Caki2 (cell line): ENCODE measurements at regions of chr17 and their contacts with region 1.

Region 1: DNA sequence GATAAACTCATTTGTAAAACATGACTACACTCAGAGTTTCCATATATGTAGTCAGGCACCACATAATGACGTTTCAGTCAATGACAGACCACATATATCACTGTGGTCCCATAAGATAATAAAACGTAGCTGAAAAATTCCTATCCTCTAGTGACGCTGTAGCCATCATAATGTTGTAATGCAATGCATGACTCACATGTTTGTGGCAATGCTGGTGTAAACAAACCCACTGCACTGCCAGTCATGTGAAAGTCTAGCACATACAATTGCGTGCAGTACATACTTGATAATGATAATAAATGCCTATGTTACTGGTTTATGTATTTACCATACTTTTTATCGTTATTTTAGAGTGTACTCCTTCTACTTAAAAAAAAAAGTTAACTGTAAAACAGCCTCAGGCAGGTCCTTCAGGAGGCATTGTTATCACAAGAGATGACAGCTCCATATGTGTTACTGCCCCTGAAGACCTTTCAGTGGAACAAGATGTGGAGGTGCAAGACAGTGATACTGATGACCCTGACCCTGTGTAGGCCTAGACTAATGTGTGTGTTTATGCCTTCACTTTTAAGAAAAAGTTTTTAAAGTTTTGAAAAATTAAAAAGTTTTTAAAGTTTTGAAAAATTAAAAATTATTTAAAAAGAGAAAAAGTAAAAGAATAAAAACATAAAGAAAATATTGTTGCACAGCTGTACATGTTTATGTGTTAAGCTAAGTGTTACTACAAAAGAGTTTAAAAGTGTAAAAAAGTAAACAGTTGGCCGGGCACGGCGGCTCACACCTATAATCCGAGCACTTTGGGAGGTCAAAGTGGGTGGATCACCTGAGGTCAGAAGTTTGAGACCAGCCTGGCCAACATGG is 9.0 kb downstream of the STAT5B start:
- DNase-seq: peak; percentile 36

Region 2: DNA sequence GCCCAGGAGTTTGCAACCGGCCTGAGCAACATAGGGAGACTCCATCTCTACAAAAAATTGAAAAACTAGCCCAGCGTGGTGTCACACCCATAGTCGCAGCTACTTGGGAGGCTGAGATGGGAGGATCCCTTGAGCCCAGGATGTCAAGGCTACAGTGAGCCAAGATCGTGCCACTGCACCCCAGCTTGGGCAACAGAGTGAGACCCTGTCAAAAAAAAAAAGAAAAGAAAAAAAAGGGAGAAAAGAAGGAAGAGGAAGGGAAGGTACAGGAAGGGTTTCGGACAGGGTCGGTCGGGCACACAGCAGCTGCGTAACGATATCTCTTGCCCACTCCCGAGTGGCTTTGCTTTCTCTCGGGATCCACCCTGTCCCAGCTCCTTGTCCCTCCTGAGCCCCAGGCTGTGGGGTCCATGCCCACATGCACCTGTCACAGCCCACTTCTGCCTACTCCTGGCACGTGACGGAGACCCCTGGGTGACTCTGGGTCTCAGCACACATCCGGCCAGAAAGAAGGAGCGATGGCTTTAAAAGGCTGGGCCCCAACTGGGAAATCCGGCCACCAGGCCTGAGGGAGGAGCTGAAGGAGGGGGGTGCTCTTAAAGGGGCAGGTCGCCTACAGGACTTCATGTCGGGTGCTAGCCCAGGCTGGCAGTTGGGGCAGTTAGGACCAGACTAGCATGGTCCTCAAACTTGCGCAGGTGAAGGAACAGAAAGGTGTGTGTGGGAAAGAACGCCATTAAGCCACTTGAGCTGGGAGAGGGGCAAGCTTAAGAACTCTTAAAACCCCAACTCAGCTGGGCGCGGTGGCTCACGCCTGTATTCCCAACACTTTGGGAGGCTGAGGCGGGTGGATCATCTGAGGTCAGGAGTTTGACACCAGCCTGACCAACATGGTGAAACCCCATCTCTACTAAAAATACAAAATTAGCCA is 72.9 kb before region 1 on chr17 and contains the start of gene GHDC:
- in situ Hi-C with region 1: no loop called
- DNase-seq: peak; percentile 77
- total RNA-seq, gene GHDC: 18.4 and 22.8 TPM in 2 replicates

Region 3: DNA sequence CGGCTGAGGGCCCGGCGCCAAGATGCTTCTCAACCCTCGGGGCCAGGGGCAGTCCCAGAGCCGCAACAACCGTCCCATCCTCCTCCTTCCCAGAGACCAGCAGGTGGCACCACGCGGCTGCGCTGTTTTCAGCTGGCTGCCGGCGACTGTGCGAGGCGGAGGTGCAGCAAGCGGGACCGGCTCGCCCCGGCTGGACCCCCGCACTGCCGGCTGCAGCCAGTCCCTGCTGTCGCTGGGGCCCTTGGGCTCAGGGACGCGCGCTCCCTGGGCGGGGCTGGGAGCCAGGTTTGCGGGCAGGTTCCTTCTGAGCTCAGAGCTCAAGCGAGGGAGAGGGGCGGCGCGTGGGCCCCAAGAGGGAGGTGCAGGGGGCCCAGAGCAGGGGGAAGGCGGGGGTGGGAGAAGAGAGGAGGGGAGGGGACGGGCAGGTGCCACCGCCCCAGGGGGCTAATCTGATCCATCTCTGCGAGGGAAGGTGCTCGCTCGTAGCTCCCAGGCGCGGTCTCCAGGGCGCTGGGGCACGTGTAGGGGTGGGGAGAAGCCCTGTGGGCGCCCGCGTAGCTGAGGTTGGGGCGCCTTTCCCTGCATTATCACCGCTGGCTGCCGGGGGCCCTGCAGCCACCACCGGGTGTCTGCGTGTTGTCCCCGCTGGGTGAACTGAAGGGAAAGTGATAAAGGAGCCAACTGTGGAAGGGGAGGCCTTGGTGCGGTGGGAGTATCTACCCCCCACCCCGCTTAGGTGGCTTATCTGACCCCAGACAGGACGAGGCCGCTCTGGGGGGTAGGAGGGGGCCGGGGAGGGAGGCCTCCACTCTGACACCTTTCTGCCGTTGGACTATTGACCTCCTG is 45.4 kb after region 1 on chr17:
- in situ Hi-C with region 1: loop called (anchors 10 kb)
- DNase-seq: peak; percentile 69

Region 4: DNA sequence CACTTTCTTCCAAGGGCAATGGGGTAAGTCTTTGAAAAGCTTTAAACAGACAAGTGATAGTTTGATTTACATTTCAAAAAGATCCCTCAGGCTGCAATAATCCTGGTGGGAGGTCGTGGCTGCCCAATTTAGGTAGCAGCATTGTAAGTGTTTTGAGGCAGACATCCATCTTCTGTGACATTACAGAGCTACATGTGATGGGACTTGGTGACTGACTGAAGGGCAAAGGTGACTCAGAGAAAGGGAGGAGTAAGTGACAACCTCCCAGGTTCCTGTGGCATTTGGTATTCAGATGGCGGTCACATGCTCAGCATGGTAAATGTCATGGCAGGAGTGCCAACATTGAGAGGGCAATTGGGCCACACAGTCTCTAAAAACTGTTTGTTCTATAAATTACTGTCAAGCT is 94.6 kb after region 1 on chr17:
- in situ Hi-C with region 1: no loop called
- DNase-seq: peak; percentile 56

Region 5: GRCh38 chr17:43367737-43368242 is 1100.6 kb after region 1 on chr17:
- in situ Hi-C with region 1: no loop called
- DNase-seq: peak; percentile 99